CD14-positive monocyte (primary cell): ENCODE measurements at regions of chr12 and their contacts with region 1.

Region 1: DNA sequence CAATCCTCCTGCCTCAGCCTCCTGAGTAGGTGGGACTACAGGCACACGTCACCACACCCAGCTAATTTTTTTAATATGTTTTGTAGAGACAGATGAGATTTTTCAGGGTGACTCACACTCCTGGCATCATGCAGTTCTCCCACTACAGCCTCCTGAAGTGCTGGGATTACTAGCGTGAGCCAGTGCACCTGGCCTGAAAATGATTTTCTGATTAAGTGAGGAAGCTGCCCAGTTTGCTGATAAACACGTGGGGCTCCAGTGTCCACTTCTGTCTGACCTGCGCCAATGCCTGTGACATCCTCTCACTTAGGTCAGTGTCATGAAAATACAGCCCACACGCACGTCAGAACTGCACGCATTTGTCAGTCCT is 37.0 kb upstream of the SFSWAP start:
- DNase-seq: no peak
- H3K4me3 ChIP-seq: no peak overlapping the region
- H3K4me3 Mint-ChIP-seq: peak overlapping the region in 1 of 2 donors; percentile 60
- H3K27ac ChIP-seq: no peak overlapping the region
- H3K27ac Mint-ChIP-seq: peak overlapping the region in 5 of 7 donors; percentile 30 to 94 (median 57)
- H3K4me1 ChIP-seq: peaks cover 19 to 22% of the 10 kb centered on the region in 2 donors
- H3K4me1 Mint-ChIP-seq: peaks cover 20% of the 10 kb centered on the region
- H3K27me3 ChIP-seq: peaks cover 0 to 3% of the 10 kb centered on the region in 2 donors
- H3K27me3 Mint-ChIP-seq: peaks cover 10 to 24% (median 13%) of the 10 kb centered on the region in 3 donors
- CTCF ChIP-seq: no peak

Region 2: DNA sequence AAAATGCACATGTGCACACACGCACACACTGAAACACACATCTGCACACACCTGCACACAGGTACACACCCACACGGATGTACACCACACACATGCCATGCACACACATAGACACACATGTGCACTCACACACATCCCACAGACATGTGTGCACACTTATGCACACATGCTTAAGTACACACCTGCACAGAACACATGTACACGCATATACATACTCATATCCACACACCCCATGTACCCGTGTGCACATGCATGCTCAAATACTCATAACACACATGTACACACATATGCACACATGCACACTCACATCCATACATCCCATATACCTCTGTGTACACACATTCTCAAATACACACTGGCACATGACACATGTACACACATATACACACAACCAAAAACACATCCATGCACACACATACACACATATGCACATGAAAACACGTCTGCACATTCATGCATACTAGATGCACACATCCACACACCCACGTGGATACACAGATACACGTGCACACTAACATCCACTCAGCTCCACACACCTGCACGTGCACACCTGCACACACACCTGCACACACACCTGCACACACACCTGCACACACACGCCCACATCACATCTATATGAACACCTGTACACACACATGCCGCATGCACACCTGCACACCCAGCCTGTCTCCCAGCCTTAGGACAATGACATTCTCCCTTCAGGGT is 383.5 kb before region 1 on chr12:
- intact Hi-C with region 1: loop called in 1 of 2 experiments (anchors 5 kb)
- DNase-seq: no peak
- H3K4me3 ChIP-seq: no peak overlapping the region
- H3K4me3 Mint-ChIP-seq: no peak overlapping the region
- H3K27ac ChIP-seq: no peak overlapping the region
- H3K27ac Mint-ChIP-seq: peak overlapping the region in 1 of 7 donors; percentile 43
- H3K4me1 ChIP-seq: no peaks in the 10 kb centered on the region
- H3K4me1 Mint-ChIP-seq: no peaks in the 10 kb centered on the region
- H3K27me3 ChIP-seq: no peaks in the 10 kb centered on the region
- H3K27me3 Mint-ChIP-seq: peaks cover 0 to 4% (median 3%) of the 10 kb centered on the region in 3 donors
- CTCF ChIP-seq: no peak

Region 3: GRCh38 chr12:131901431-131902331 is 227.8 kb after region 1 on chr12:
- intact Hi-C with region 1: no loop called
- DNase-seq: no peak
- H3K4me3 ChIP-seq: no peak overlapping the region
- H3K4me3 Mint-ChIP-seq: no peak overlapping the region
- H3K27ac ChIP-seq: no peak overlapping the region
- H3K27ac Mint-ChIP-seq: peak overlapping the region in 1 of 7 donors; percentile 31
- H3K4me1 ChIP-seq: peaks cover 8 to 19% of the 10 kb centered on the region in 2 donors
- H3K4me1 Mint-ChIP-seq: peaks cover 18% of the 10 kb centered on the region
- H3K27me3 ChIP-seq: no peaks in the 10 kb centered on the region
- H3K27me3 Mint-ChIP-seq: peaks cover 0 to 2% (median 0%) of the 10 kb centered on the region in 3 donors
- CTCF ChIP-seq: no peak